Activated naive CD4-positive, alpha-beta T cell treated with anti-CD3 and anti-CD28 coated beads for 36 hours (primary cell): ENCODE measurements at regions of chrX and their contacts with region 1.

Region 1: DNA sequence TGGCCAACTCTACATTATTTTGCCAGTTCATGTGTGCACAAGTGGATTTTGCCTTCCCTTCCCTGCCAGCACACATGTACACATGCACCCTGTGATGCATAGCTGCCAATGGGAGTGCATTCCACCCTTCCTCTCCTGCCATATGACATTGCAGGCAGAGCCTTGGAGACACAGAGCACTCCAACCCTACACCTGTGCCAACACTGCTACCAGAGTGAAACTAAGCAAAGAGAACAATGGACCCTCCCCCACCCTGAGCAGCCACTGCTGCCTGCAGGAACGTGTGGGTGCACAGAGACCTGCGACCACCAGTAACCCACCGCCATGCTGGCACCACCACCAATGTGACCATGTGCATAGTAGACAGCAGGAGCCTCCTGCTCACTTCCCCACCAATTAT is 78.4 kb downstream of the ITM2A start:
- DNase-seq: no peak
- H3K4me3 Mint-ChIP-seq: no peak overlapping the region
- H3K27ac Mint-ChIP-seq: no peak overlapping the region
- H3K4me1 Mint-ChIP-seq: peaks cover 49% of the 10 kb centered on the region
- H3K27me3 Mint-ChIP-seq: no peaks in the 10 kb centered on the region

Region 2: GRCh38 chrX:79107891-79108718 is 180.6 kb before region 1 on chrX:
- CTCF ChIA-PET with region 1: no interaction called
- intact Hi-C with region 1: no loop called
- DNase-seq: no peak
- H3K4me3 Mint-ChIP-seq: peak overlapping the region; percentile 49
- H3K27ac Mint-ChIP-seq: peak overlapping the region; percentile 88
- H3K4me1 Mint-ChIP-seq: peaks cover 64% of the 10 kb centered on the region
- H3K27me3 Mint-ChIP-seq: no peaks in the 10 kb centered on the region

Region 3: DNA sequence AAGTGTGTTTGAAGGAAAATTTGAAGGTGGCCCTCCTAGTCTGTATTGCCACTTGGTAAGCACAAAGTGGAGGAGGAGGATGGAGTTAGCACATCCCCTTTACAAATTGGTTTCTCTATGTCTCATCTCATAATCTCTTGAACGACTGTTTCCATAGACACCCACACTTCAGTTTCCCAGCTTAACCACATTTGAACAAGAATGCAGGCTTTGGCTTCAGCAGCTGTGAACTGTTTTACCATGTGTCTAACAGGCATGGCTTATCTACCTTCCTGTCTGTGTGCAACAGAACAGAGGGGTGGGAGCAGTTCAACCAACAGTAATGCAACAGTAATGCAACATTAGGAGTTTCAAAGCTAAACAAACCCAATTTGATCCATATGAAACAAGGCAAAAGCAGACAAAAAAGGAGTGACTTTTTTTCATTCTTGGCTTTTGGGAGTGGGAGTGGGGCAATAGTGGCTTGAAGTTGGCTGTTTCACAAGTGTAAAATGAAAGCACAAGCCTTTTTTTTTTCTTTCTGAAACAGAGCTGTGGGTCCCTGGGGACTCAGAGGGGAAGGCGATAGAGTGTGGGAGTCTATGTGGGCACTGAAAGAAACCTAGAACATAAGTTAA is 29.6 kb before region 1 on chrX:
- CTCF ChIA-PET with region 1: no interaction called
- intact Hi-C with region 1: no loop called
- DNase-seq: peak; percentile 68
- H3K4me3 Mint-ChIP-seq: peak overlapping the region; percentile 58
- H3K27ac Mint-ChIP-seq: peak overlapping the region; percentile 91
- H3K4me1 Mint-ChIP-seq: peaks cover 83% of the 10 kb centered on the region
- H3K27me3 Mint-ChIP-seq: no peaks in the 10 kb centered on the region

Region 4: DNA sequence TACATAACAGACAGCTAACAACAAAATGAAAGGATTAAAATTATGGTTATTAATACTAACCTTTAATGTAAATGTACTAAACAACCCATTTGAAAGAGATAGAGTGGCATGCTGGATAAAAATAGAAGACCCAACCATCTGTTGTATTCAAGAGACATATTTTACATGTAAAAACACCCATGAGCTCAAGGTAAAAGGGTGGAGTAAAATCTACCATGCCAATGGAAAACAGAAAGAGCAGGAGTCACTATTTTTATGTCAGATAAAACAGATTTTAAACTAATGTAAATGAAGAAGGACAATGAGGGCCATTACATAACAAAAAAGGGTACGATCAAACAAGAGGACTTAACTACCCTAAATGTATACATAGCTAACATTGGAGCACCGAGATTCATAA is 12.1 kb after region 1 on chrX:
- CTCF ChIA-PET with region 1: no interaction called
- intact Hi-C with region 1: no loop called
- DNase-seq: no peak
- H3K4me3 Mint-ChIP-seq: no peak overlapping the region
- H3K27ac Mint-ChIP-seq: no peak overlapping the region
- H3K4me1 Mint-ChIP-seq: no peaks in the 10 kb centered on the region
- H3K27me3 Mint-ChIP-seq: no peaks in the 10 kb centered on the region

Region 5: GRCh38 chrX:79336869-79337815 is 48.4 kb after region 1 on chrX:
- CTCF ChIA-PET with region 1: interaction called, 3 read pairs
- intact Hi-C with region 1: loop called (anchors 2 kb)
- DNase-seq: no peak
- H3K4me3 Mint-ChIP-seq: peak overlapping the region; percentile 65
- H3K27ac Mint-ChIP-seq: peak overlapping the region; percentile 74
- H3K4me1 Mint-ChIP-seq: peaks cover 29% of the 10 kb centered on the region
- H3K27me3 Mint-ChIP-seq: no peaks in the 10 kb centered on the region